ENCODE measurements at regions of chr15 and their contacts with region 1.

Region 1: GRCh38 chr15:89358755-89359439 is 24.3 kb upstream of the POLG start:
- H3K4me3 ChIP-seq: peak overlapping the region; percentile 55
- H3K27ac ChIP-seq: no peak overlapping the region
- H3K4me1 ChIP-seq: peaks cover 4% of the 10 kb centered on the region; the same call in 1 of the 2 replicates
- CTCF ChIP-seq: peak; percentile 99

Region 2: GRCh38 chr15:88638626-88639372 is 720.1 kb before region 1 on chr15 and contains the start of gene ISG20:
- CTCF ChIA-PET with region 1: no interaction called
- POLR2A ChIA-PET with region 1: no interaction called
- H3K4me3 ChIP-seq: peak within 1 kb of the TSS; percentile 29
- H3K27ac ChIP-seq: peak within 1 kb of the TSS; percentile 61
- H3K4me1 ChIP-seq: peaks cover 6% of the 10 kb centered on the region; the same call in 1 of the 2 replicates
- CTCF ChIP-seq: peak; percentile 87

Region 3: DNA sequence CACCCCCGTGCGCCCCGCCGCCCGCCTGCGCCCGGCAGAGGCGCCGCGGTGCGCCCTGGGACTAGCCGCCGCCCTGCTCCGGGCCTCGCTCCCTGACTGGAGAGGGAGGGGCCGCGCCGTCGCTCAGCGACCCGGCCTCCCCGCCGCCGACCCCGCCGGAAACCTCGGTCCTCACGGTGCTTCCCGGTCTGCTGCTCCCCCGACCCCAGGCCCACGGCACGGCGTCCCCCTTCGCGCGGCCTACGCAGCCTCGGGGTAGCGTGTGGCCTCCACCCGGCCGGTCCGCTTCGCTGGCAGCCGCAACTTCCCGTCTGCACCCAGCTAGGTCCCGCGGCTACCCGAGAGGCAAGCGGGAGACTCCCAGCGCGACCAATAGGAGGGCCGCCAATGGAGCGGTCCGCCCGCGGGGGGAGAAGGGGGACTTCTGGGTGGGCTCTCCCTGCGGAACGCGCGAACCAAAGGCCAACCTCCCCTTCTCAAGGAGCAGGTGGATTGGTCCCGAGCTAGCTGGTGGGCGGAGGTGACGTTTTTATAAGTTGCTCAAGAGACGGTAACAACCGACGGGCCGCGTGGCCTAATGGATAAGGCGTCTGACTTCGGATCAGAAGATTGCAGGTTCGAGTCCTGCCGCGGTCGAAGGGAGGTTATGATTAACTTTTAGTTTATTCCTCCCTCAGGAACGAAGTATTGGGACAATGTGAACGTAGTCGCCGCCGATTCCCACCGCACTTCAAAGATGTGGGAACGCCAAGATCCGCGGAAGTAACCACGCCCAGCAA is 24.2 kb before region 1 on chr15 and contains the start of gene POLG:
- CTCF ChIA-PET with region 1: interaction called, 199 read pairs
- POLR2A ChIA-PET with region 1: interaction called, 7 read pairs
- H3K4me3 ChIP-seq: peak within 1 kb of the TSS; percentile 95
- H3K27ac ChIP-seq: peak within 1 kb of the TSS; percentile 62
- H3K4me1 ChIP-seq: peaks cover 10% of the 10 kb centered on the region
- CTCF ChIP-seq: no peak

Region 4: DNA sequence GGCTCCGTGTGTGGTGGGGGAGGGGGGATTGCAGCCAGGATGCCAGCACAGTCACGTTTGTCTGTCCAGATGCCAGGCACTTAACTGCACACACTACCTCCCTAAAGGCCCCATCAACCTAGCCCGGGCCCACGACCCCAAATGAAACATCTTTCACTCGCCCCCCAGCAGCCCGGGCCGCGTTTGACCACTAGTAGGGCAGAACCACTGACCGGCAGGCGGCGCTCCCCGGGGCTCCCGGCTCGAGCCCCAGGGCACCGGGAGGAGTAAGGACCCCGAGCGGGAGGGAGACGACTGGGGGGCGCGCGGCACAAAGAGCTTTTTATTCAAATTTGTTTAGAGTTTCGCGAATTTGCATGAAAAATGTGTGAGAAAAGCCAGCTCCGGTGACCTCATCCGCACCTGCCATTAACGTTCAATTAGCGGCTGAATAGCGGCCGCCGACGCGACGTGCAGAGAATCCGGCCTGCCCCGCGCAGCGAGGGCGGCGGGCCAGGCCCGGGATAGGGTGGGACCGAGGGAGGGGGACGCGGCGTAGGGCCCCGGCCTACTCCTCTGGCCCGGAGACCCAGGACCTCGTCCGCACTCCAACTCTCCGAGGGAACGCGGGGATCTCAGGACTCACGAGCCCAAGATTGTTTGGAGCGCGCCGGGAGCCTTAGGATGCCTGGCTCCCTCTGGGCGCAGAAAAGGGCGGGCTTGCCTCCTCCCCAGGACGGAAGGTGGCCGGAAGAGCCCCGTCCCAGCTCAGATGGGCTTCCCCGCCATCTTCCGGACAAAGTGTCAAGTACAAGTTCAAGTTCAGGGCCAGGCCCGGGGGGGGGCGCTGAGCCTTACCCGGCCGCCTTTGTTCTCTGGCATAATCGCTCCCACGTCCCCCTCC is 40.6 kb after region 1 on chr15:
- CTCF ChIA-PET with region 1: interaction called, 242 read pairs
- POLR2A ChIA-PET with region 1: interaction called, 7 read pairs
- H3K4me3 ChIP-seq: peak overlapping the region; percentile 45
- H3K27ac ChIP-seq: peak overlapping the region; percentile 66; the same call in 1 of the 2 replicates
- H3K4me1 ChIP-seq: peaks cover 8% of the 10 kb centered on the region
- CTCF ChIP-seq: peak; percentile 85

Region 5: DNA sequence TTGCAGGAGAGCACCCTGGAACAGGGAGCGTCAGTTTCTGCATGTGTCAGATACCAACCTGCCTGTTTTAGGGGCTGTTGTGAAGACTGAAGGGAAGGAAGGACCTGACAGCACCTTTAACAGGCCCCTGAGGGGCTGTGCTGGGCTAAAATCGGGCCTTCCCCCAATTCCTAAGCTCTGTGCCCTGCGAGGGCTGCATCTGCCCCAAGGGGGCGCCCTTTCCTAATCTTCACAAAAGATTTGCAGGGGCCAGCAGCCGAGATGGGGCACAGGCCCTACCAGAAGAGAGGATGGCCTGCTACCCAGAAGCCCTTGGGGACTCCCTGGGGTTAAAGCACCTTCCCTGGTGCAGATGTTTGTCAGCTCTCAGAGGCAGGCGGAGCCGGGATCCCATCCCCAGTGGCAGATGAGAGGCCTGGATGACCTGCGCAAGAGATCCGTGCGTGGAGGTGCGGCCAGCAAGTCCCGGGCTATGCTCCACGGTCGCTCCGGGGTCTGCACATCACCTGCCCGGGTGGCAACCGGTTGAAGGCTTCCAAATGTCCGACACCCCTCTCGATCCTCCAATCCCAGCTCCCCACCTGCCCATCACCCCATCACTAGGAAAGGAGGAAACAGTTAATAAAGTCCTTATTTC is 83.9 kb after region 1 on chr15:
- CTCF ChIA-PET with region 1: interaction called, 189 read pairs
- POLR2A ChIA-PET with region 1: interaction called, 4 read pairs
- H3K4me3 ChIP-seq: no peak overlapping the region
- H3K27ac ChIP-seq: no peak overlapping the region
- H3K4me1 ChIP-seq: no peaks in the 10 kb centered on the region
- CTCF ChIP-seq: peak; percentile 61; the same call in 1 of the 2 replicates

Region 6: GRCh38 chr15:89472785-89473256 is 113.9 kb after region 1 on chr15:
- CTCF ChIA-PET with region 1: interaction called, 206 read pairs
- POLR2A ChIA-PET with region 1: interaction called, 5 read pairs
- H3K4me3 ChIP-seq: no peak overlapping the region
- H3K27ac ChIP-seq: no peak overlapping the region
- H3K4me1 ChIP-seq: no peaks in the 10 kb centered on the region
- CTCF ChIP-seq: peak; percentile 90

Region 7: DNA sequence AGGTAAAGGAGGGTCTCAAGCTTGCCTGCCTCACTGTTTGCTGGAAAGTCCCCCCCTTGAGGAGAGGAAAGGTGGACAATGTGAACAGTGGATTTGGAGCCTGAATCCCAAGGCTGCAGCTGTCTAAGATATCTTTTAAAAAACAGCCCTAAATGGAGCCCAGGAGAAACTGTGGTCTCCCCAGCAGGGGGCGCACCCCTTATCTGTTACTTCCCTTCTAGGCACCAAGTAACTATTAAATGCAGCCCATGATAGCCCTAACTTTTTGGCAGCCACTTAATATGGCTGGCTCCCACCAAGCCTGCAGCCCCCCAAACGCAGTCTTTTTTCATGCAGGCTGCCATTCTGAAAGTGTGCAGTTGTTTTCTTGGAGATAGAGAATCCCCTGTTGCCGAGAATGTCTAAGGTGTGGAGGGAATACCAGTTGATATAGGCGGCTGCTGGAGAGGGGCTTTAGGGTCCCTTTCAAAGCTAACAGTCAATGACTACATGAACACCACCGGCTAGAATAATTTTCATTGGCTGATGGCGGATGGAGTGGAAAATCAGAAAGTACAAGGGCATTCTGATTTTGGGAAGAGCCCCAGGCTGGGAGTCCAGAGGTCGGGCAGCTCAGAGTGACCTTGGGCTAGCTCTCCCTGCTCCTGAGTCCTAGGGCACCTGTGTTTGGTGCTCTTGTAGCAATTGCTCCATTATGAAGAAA is 136.2 kb after region 1 on chr15:
- CTCF ChIA-PET with region 1: interaction called, 23 read pairs
- POLR2A ChIA-PET with region 1: no interaction called
- H3K4me3 ChIP-seq: no peak overlapping the region
- H3K27ac ChIP-seq: no peak overlapping the region
- H3K4me1 ChIP-seq: no peaks in the 10 kb centered on the region
- CTCF ChIP-seq: no peak; the same call in 1 of the 2 replicates

Region 8: GRCh38 chr15:89946781-89947221 is 587.9 kb after region 1 on chr15:
- CTCF ChIA-PET with region 1: no interaction called
- POLR2A ChIA-PET with region 1: no interaction called
- H3K4me3 ChIP-seq: no peak overlapping the region
- H3K27ac ChIP-seq: no peak overlapping the region
- H3K4me1 ChIP-seq: no peaks in the 10 kb centered on the region
- CTCF ChIP-seq: no peak